ENCODE measurements at regions of chr2 and their contacts with region 1.

Region 1: DNA sequence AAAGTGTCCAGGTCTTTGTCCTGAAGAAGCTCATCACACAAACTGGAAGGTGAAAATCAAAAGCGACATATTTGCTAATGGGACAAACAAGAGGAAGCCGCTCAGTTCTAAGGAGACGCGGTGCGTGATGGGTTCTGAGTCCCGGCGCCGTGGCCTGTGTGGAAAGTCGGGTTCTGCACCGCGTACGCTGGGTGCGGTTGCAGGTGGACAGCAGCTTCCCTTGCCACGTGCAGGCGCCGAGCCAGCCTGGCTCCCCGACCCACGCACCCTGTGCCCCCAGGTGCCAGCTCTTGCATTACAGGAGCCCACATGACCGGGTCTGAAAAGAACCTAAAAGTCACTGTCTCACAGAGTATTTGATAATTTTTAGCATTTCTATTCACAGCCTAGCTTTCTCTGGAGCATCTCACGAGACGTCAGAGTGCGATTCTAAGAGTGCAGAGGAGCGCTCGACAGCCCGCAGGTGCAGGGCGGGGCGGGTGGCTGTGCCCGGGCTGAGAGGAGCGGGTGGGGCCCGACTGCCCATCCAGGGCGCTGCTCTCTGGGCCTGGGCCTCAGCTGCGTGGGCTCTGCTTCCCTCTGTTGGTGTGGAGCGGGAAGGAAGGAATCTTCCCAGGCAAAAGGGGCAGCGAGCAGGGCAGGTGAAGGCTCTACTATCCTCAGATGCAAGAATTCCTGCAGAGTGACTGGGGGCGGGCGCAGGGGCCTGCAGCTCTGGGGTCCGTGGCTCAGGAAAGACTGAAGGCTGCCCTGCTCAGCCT is 39.4 kb downstream of the MYT1L start:
- DNase-seq: peak in 7 of 10 donors; percentile 42 to 92 (median 49)

Region 2: DNA sequence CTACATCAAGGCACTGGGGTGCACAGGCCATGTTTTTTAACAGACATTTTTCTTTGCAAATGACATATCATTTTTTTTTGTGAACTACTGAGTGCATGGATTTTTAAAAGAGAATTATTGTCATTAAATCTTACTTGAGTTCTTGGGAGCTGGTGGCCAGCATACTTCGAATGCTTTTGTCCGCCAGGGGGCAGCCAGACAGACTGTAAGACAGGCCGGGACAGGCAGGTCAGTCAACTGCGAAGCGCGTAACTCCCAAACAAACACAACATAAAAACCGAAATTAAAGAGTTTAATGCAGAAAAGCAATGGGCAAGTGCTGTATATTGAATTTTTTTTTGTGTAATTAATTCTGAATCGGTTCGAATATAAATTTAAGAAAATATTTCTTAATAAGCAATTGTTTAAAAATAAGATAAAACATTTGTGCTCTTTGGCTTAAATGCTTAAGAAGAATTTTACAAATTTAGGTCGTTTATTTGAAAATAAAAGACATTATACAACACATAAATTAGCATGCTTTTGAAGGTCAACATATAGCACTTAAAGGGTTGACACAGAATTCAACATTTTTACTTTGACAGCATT is 405.2 kb before region 1 on chr2:
- intact Hi-C with region 1: loop called (anchors 10 kb)
- DNase-seq: peak in 9 of 10 donors; percentile 62 to 95 (median 76)

Region 3: GRCh38 chr2:2127467-2127866 is 164.2 kb before region 1 on chr2:
- intact Hi-C with region 1: loop called (anchors 10 kb)
- DNase-seq: peak in 2 of 10 donors; percentile 43 to 85

Region 4: GRCh38 chr2:2333076-2333475 is 41.4 kb after region 1 on chr2:
- intact Hi-C with region 1: no loop called
- DNase-seq: peak in 6 of 10 donors; percentile 38 to 85 (median 70)

Measured in posterior cingulate gyrus (tissue), 11 donors.